MCF 10A (cell line): ENCODE measurements at regions of chr20 and their contacts with region 1.

Region 1: DNA sequence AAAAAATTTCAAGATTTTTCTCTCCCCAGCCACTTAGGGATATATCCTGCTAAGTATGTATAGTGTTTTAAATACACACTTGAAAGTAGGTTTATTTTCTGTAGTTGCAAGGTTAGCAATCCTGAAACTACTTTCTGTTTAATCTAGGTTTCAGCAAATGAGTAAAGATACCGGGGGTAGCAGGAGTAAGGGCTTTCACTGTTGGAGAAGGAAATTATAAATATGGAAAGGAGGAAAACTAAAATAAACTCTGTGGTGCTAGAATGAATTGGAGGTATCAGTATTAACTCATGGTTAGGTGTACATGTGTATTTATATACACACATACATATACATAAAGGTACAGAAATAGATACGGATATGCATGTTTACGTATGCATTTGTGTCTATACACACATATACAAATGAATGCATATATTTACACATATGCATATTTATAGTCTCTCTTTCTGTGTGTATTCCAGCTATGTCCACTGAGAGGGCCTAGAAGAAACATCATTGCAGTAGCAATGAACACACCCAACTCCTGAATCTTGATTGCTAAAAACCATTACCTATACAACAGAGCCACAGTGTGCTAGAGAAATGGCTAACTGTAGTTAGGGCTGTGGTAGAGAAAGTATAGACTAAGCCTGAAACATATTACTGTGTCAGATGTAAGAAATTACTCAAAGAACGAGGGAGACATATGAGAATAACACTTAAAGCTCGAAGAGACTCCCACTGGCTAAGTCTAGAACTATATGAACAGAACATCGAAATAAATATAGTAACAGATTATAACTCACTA is 95.9 kb upstream of the EMILIN3 start:
- DNase-seq: no peak
- H3K4me3 Mint-ChIP-seq: no peak overlapping the region
- H3K27ac Mint-ChIP-seq: no peak overlapping the region
- H3K4me1 Mint-ChIP-seq: no peaks in the 10 kb centered on the region
- H3K27me3 Mint-ChIP-seq: no peaks in the 10 kb centered on the region
- CTCF ChIP-seq: no peak

Region 2: DNA sequence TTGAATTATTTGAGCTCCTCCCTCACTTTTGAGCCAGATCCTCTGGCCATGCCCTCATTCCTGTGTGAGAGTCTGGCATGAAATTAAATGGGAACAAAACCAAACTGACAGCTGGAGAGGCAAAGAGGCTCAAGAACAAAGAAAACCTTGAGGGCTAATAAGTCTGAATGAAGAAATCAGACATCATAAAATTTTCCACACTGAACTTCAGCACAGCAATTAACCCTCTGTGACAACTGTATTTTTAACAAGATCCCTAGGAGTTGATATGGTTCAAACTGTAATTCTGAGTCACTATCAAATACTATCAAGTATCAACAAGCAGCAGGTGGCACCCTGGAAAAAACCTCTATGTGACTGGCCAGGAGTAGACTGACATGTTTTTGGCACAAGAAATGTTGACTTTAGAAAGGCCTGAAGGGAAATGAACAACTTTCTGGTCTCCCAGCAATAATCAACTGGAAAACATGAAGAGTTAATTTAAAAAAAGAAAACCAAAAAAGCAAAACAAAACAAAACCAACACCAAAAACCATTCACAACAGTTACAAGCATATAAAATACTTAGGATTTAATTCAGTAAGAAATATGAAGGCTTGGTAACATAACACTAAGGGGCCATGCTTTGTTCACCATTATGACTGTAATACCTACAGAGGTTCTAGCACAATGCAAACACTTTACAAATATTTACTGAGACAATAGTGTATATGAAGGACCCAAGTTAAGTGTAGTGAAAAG is 13.6 kb after region 1 on chr20:
- CTCF ChIA-PET with region 1: interaction called, 3 read pairs
- POLR2A ChIA-PET with region 1: interaction called, 10 read pairs
- intact Hi-C with region 1: no loop called
- DNase-seq: peak; percentile 69
- H3K4me3 Mint-ChIP-seq: no peak overlapping the region
- H3K27ac Mint-ChIP-seq: peak overlapping the region; percentile 65
- H3K4me1 Mint-ChIP-seq: peaks cover 17% of the 10 kb centered on the region
- H3K27me3 Mint-ChIP-seq: no peaks in the 10 kb centered on the region
- CTCF ChIP-seq: no peak